Activated CD4-positive, alpha-beta T cell treated with anti-CD3 and anti-CD28 coated beads for 36 hours (primary cell): ENCODE measurements at regions of chr18 and their contacts with region 1.

Region 1: DNA sequence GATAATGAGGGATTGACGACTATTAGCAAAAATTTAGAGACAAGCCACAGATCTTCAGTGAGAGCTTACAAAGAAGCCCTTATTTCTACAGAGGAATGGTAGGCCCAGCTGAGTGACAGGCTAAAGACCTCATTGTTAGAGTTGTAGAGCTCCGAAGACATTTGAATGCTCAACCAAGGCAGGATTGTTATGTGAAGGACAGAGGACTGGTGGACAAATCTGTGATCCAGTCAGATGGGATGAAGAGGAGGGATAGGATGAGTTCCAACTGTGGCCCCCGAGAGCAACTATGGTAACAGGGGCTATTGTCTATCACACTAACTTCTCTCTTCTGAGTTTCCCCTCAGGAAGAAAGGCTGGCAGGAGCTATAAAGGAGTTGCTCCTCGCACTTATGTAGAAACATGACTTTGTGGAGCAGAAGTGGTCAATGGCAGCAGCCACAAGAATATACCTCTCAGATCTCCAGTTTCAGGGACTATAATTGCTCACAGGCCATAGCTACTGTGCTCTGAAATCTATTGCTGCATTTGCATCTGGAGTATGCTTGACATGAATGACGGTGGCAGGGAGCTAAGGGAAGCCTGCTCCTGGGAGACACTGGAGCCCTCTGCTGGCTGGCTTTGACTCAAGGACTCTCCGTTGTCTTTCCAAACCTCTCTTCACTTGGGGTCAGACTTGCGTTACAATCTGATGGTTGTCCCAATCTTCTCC is 50.3 kb upstream of the GREB1L start:
- DNase-seq: peak; percentile 56
- ATAC-seq: peak; percentile 30
- H3K4me3 Mint-ChIP-seq: no peak overlapping the region
- H3K27ac Mint-ChIP-seq: no peak overlapping the region
- H3K4me1 Mint-ChIP-seq: no peaks in the 10 kb centered on the region
- H3K27me3 Mint-ChIP-seq: peaks cover 8% of the 10 kb centered on the region

Region 2: GRCh38 chr18:20966795-20967194 is 225.0 kb before region 1 on chr18:
- CTCF ChIA-PET with region 1: interaction called, 5 read pairs
- POLR2A ChIA-PET with region 1: no interaction called
- intact Hi-C with region 1: loop called in 1 of 2 experiments (anchors 10 kb)
- DNase-seq: no peak
- ATAC-seq: no peak
- H3K4me3 Mint-ChIP-seq: no peak overlapping the region
- H3K27ac Mint-ChIP-seq: no peak overlapping the region
- H3K4me1 Mint-ChIP-seq: no peaks in the 10 kb centered on the region
- H3K27me3 Mint-ChIP-seq: no peaks in the 10 kb centered on the region

Region 3: GRCh38 chr18:21210278-21210677 is 18.5 kb after region 1 on chr18:
- CTCF ChIA-PET with region 1: interaction called, 12 read pairs
- POLR2A ChIA-PET with region 1: no interaction called
- intact Hi-C with region 1: loop called in 1 of 2 experiments (anchors 2 kb)
- DNase-seq: no peak
- ATAC-seq: no peak
- H3K4me3 Mint-ChIP-seq: no peak overlapping the region
- H3K27ac Mint-ChIP-seq: no peak overlapping the region
- H3K4me1 Mint-ChIP-seq: no peaks in the 10 kb centered on the region
- H3K27me3 Mint-ChIP-seq: no peaks in the 10 kb centered on the region

Region 4: DNA sequence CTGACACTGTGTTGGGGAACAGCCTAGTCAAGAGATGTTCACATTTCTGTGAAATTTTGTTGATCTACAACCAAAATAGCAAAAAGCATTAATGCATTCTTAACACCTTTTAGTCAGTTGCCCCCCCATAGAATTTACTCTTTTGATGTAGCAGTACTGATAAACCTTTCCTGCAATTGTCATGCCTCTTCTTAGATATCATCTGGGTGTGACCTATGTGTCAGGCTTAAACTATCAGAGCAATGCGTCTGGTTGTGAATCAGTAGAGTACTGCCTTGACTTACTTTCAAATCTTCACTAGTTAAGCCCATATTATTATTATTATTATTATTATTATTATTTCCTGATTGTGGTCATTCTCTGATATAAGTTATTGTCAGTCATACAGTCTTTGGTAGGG is 112.2 kb after region 1 on chr18:
- CTCF ChIA-PET with region 1: no interaction called
- POLR2A ChIA-PET with region 1: no interaction called
- intact Hi-C with region 1: loop called in 1 of 2 experiments (anchors 5 kb)
- DNase-seq: no peak
- ATAC-seq: no peak
- H3K4me3 Mint-ChIP-seq: no peak overlapping the region
- H3K27ac Mint-ChIP-seq: no peak overlapping the region
- H3K4me1 Mint-ChIP-seq: no peaks in the 10 kb centered on the region
- H3K27me3 Mint-ChIP-seq: peaks cover 21% of the 10 kb centered on the region

Region 5: GRCh38 chr18:21571772-21572171 is 380.0 kb after region 1 on chr18:
- CTCF ChIA-PET with region 1: no interaction called
- POLR2A ChIA-PET with region 1: no interaction called
- intact Hi-C with region 1: loop called in 1 of 2 experiments (anchors 10 kb)
- DNase-seq: no peak
- ATAC-seq: no peak
- H3K4me3 Mint-ChIP-seq: no peak overlapping the region
- H3K27ac Mint-ChIP-seq: no peak overlapping the region
- H3K4me1 Mint-ChIP-seq: peaks cover 2% of the 10 kb centered on the region
- H3K27me3 Mint-ChIP-seq: no peaks in the 10 kb centered on the region

Region 6: GRCh38 chr18:21851327-21851972 is 659.7 kb after region 1 on chr18:
- CTCF ChIA-PET with region 1: no interaction called
- POLR2A ChIA-PET with region 1: no interaction called
- intact Hi-C with region 1: loop called in 1 of 2 experiments (anchors 10 kb)
- DNase-seq: no peak
- ATAC-seq: no peak
- H3K4me3 Mint-ChIP-seq: no peak overlapping the region
- H3K27ac Mint-ChIP-seq: no peak overlapping the region
- H3K4me1 Mint-ChIP-seq: peaks cover 7% of the 10 kb centered on the region
- H3K27me3 Mint-ChIP-seq: no peaks in the 10 kb centered on the region

Region 7: DNA sequence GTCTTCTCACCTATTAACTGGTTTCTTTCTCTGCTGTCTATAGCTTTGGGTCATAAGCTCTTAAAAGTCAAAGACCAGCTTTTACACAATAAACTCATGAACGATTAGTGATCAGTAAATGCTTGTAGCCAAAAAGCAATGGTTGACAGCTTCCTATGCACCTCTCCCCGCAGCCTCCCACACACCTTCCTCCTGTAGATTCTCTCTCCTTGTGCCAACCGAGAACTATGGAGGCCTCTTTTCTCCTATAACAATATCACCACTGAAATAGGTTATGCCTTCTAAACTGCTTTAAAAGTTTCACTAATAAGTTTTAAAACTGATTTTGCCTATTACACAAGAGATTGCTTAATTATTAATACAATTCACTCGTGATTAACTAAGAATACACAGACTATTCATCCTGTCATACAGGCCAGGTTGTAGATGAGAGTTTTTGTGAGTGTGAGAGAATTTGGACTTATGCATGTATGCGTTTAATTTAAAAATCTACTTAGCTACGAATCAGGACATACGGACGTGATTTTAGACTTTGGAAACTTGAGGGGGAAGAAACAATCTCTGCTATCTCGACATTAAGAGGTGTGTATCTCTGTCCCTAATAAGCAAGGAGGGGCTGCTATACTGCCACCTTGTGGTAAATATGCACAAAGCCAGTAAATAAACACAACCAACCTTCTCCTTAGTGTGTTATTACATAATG is 1512.3 kb after region 1 on chr18:
- CTCF ChIA-PET with region 1: no interaction called
- POLR2A ChIA-PET with region 1: no interaction called
- intact Hi-C with region 1: loop called in 1 of 2 experiments (anchors 5 kb)
- DNase-seq: peak; percentile 6
- ATAC-seq: no peak
- H3K4me3 Mint-ChIP-seq: no peak overlapping the region
- H3K27ac Mint-ChIP-seq: no peak overlapping the region
- H3K4me1 Mint-ChIP-seq: no peaks in the 10 kb centered on the region
- H3K27me3 Mint-ChIP-seq: peaks cover 8% of the 10 kb centered on the region